Activated CD8-positive, alpha-beta T cell treated with anti-CD3 and anti-CD28 coated beads, Interleukin-2, amount 10 ng/mL, durations not matched to agents 7 days and 5 days (primary cell): ENCODE measurements at regions of chr14 and their contacts with region 1.

Region 1: GRCh38 chr14:91323671-91324605 is 79.4 kb upstream of the GPR68 start:
- DNase-seq: peak; percentile 94
- ATAC-seq: peak; percentile 82
- H3K4me3 Mint-ChIP-seq: peak overlapping the region; percentile 73
- H3K27ac Mint-ChIP-seq: peak overlapping the region; percentile 97
- H3K4me1 Mint-ChIP-seq: peaks cover 79% of the 10 kb centered on the region
- H3K27me3 Mint-ChIP-seq: no peaks in the 10 kb centered on the region

Region 2: GRCh38 chr14:91350813-91351511 is 27.0 kb after region 1 on chr14:
- CTCF ChIA-PET with region 1: interaction called, 83 read pairs
- POLR2A ChIA-PET with region 1: interaction called, 5 read pairs
- DNase-seq: peak; percentile 85
- ATAC-seq: peak; percentile 85
- H3K4me3 Mint-ChIP-seq: peak overlapping the region; percentile 78
- H3K27ac Mint-ChIP-seq: peak overlapping the region; percentile 94
- H3K4me1 Mint-ChIP-seq: peaks cover 94% of the 10 kb centered on the region
- H3K27me3 Mint-ChIP-seq: no peaks in the 10 kb centered on the region

Region 3: GRCh38 chr14:91373591-91374254 is 49.8 kb after region 1 on chr14:
- CTCF ChIA-PET with region 1: interaction called, 22 read pairs
- POLR2A ChIA-PET with region 1: interaction called, 6 read pairs
- DNase-seq: peak; percentile 76
- ATAC-seq: peak; percentile 46
- H3K4me3 Mint-ChIP-seq: peak overlapping the region; percentile 78
- H3K27ac Mint-ChIP-seq: peak overlapping the region; percentile 91
- H3K4me1 Mint-ChIP-seq: peaks cover 100% of the 10 kb centered on the region
- H3K27me3 Mint-ChIP-seq: no peaks in the 10 kb centered on the region

Region 4: DNA sequence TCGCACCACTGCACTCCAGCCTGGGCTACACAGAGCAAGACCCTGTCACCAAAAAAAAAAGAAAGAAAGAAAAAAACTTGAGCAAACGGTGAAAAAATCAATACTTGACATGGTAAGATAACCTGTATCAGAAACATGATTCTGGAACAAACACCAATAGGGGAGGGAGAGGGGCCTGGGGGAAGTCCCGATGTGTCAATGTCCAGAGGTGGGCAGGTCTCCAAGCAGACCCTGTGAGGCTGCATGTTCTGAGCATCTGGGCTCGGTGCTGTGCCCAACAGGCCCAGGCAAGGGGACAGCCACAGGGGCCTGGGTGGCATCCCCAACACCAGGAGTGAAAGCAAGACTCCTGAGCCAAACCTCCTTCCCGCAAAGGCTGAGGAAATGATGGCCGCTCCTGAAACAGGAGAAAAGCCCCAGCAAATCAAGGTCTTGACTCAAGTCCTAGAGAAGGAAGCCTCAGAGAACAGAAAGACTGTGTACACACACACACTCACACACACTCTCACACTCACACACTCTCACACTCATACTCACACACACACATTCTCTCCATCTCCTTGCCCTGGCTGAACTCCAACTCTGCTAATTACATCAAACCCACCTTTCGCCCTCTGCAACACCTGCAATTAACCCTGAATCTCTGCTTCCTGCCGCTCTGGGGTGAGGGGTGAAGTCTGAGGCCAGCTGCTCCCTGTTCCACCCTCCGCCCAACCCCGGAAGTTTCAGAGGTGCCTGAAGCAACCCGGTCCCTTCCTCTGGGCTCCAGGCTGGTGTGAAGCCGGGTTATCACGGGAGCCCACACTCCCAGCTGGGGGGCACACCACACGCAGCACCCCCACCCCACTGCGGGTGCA is 73.2 kb after region 1 on chr14:
- CTCF ChIA-PET with region 1: interaction called, 19 read pairs
- POLR2A ChIA-PET with region 1: interaction called, 3 read pairs
- DNase-seq: peak; percentile 82
- ATAC-seq: peak; percentile 76
- H3K4me3 Mint-ChIP-seq: peak overlapping the region; percentile 59
- H3K27ac Mint-ChIP-seq: peak overlapping the region; percentile 87
- H3K4me1 Mint-ChIP-seq: peaks cover 94% of the 10 kb centered on the region
- H3K27me3 Mint-ChIP-seq: no peaks in the 10 kb centered on the region

Region 5: GRCh38 chr14:91402771-91403600 is 79.0 kb after region 1 on chr14:
- CTCF ChIA-PET with region 1: interaction called, 19 read pairs
- POLR2A ChIA-PET with region 1: interaction called, 3 read pairs
- DNase-seq: peak; percentile 49
- ATAC-seq: peak; percentile 10
- H3K4me3 Mint-ChIP-seq: peak overlapping the region; percentile 52
- H3K27ac Mint-ChIP-seq: peak overlapping the region; percentile 83
- H3K4me1 Mint-ChIP-seq: peaks cover 93% of the 10 kb centered on the region
- H3K27me3 Mint-ChIP-seq: no peaks in the 10 kb centered on the region

Region 6: DNA sequence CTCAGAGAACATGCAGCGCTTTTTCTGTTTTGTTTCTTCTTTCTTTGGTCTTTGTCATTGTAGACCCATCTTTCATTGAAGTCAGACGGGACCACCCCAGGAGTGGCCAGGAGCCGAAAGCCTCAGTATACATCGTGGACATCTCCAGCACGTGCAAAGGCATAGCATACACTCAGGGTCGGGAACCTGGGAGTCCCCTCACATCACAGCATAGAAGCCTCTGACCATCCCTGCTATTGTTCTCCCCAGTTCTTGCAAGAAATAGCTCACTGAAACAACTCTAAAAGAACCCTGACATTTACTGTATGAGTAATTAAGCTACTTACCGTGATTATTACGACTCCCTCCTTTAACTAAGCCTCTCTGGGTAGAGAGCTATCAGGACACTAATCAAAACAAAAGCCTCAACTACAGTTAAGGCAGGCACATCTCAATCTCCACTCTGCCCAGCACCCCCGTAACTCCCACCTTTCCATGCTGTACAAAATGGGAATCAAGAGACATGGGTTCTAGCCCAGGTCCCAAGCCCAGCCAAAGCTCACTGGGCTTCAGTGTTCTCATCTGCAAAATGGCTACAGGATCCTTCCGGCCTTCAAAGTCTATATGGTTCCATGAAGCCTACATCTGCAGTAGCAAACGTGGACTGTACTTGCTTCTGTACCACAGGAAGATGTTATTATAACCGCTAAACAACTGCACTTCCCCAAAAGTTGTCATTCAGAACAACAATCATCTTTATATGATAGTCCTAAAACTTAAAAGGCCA is 87.0 kb after region 1 on chr14:
- CTCF ChIA-PET with region 1: interaction called, 233 read pairs
- POLR2A ChIA-PET with region 1: interaction called, 61 read pairs
- DNase-seq: peak; percentile 45
- ATAC-seq: peak; percentile 14
- H3K4me3 Mint-ChIP-seq: peak overlapping the region; percentile 64
- H3K27ac Mint-ChIP-seq: peak overlapping the region; percentile 92
- H3K4me1 Mint-ChIP-seq: peaks cover 88% of the 10 kb centered on the region
- H3K27me3 Mint-ChIP-seq: no peaks in the 10 kb centered on the region

Region 7: DNA sequence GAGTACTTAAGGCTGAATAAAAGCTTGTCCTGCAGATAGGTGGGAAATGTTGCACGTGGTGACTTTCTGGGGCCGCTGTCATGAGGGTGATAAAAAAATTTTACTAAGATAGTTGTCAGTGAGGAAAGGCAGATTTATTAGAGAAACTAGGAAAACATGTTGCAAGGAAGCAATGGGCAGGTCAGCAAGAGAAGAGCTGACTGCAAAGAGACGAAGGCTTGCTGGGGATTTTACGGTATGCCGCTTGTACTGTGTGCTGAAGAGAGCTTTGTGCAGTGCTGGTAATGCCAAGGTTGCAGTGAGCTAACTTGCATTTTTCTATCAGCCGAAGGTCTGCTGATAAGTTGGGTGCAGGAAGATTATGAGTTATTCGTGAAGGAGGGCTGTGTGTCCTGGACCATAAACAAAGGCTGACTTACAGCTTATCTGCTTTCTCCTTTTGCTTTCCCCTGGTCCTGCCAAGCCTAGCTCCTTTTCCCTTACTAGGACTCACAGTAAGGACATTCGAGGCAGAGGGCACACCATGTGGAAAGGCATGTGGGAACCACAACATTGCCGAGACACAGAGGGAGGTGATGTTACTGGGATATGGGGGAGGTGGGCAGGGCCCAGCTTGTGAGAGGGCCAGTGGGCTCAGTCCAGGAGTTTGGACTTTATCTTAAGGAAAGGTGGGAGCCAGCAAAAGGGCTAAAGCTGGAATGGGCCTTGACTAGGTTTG is 101.0 kb after region 1 on chr14:
- CTCF ChIA-PET with region 1: interaction called, 233 read pairs
- POLR2A ChIA-PET with region 1: interaction called, 61 read pairs
- DNase-seq: no peak
- ATAC-seq: no peak
- H3K4me3 Mint-ChIP-seq: no peak overlapping the region
- H3K27ac Mint-ChIP-seq: no peak overlapping the region
- H3K4me1 Mint-ChIP-seq: peaks cover 16% of the 10 kb centered on the region
- H3K27me3 Mint-ChIP-seq: peaks cover 3% of the 10 kb centered on the region